H1 (cell line): ENCODE measurements at regions of chr2 and their contacts with region 1.

Region 1: DNA sequence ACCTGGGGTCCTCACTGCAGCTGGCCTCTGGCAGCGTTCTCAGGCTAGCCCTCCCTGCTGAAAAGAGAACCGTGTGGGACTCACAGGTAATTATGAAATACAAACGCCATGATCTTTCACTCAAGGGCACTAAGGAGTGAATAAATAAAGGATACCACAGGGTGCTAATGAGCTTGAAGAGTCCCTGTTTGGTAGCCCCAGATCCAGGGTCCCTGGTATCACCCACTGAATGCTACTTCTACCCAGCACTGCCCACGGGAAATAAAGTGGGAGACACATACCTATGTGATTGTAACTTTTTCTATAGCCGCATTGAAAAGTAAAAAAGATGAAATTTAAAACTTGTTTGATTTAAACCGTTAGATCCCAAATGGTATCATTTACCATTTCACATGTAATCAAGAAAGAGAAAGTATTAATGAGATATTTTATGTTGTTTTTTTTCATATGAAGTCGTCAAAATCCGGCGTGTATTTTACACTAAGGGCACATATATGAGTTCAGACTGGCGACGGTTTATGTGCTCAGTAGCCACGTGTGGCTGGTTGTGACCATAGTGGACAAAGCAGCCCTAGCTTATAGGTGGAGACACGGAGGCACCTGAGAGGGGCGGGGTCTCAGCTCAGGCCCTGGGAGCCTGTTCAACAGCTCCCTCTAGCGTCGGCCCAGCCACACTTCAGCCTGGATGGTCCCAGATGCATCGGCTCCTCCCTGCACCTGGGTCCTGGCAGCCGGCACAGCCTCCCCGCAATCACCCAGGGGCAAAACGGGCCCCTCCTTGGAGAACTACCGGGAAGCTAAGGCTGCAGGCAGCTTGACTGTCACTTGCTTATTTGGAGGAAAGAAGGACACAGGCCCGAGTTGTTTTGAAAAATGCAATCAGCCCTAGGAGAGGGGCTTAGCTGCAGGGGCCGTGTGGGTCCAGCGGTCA is 39.2 kb downstream of the ODC1 start:
- DNase-seq: peak; percentile 84 to 93
- H3K4me3 ChIP-seq: no peak overlapping the region
- H3K27ac ChIP-seq: no peak overlapping the region
- H3K4me1 ChIP-seq: peaks cover 0 to 3% (median 2%) of the 10 kb centered on the region in 4 experiments; a peak in 2 of 7 replicates
- H3K27me3 ChIP-seq: no peaks in the 10 kb centered on the region; a peak in 1 of 7 replicates
- CTCF ChIP-seq: peak; percentile 94 to 99 (median 97)
- EP300 ChIP-seq: no peak
- POLR2A ChIP-seq: no peak
- RAD21 ChIP-seq: peak; percentile 98 to 99

Region 2: DNA sequence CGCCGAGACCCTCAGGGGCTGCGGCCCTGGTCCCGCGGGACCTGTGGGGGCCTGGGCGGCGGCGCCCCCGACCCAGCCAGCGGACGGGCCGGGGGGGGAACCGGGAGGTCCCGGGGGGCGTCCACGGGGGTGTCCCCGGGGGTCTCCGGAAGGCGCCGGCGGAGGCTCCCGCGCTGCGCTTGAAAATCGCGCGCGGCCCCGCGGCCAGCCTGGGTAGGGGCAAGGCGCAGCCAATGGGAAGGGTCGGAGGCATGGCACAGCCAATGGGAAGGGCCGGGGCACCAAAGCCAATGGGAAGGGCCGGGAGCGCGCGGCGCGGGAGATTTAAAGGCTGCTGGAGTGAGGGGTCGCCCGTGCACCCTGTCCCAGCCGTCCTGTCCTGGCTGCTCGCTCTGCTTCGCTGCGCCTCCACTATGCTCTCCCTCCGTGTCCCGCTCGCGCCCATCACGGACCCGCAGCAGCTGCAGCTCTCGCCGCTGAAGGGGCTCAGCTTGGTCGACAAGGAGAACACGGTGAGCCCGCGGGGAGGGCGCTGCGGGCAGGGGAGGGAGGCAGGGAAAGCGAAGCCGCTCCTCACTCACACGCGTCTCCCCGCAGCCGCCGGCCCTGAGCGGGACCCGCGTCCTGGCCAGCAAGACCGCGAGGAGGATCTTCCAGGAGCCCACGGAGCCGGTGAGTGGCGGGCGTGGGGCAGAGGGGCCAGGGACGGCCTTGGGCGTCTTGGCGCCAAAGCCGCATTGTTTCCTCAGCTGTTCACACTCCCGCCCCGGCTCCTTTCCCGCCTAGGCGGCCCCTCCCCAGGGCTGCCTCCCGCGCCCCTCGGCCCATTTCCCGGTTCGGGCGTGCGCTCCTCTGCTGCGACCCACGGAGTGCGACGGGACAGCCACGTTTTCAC is 286.3 kb before region 1 on chr2 and contains the start of gene RRM2:
- CTCF ChIA-PET with region 1: interaction called, 31 read pairs
- POLR2A ChIA-PET with region 1: no interaction called
- DNase-seq: peak; percentile 71 to 96
- H3K4me3 ChIP-seq: peak within 1 kb of the TSS; percentile 85 to 96 (median 88)
- H3K27ac ChIP-seq: peak within 1 kb of the TSS; percentile 85
- H3K4me1 ChIP-seq: peaks cover 1 to 4% (median 4%) of the 10 kb centered on the region in 4 experiments; a peak in 5 of 7 replicates
- H3K27me3 ChIP-seq: no peaks in the 10 kb centered on the region
- CTCF ChIP-seq: no peak
- EP300 ChIP-seq: no peak
- POLR2A ChIP-seq: peak; percentile 97 to 98
- RAD21 ChIP-seq: no peak
- total RNA-seq, gene RRM2: 215 and 228 TPM in 2 replicates

Region 3: DNA sequence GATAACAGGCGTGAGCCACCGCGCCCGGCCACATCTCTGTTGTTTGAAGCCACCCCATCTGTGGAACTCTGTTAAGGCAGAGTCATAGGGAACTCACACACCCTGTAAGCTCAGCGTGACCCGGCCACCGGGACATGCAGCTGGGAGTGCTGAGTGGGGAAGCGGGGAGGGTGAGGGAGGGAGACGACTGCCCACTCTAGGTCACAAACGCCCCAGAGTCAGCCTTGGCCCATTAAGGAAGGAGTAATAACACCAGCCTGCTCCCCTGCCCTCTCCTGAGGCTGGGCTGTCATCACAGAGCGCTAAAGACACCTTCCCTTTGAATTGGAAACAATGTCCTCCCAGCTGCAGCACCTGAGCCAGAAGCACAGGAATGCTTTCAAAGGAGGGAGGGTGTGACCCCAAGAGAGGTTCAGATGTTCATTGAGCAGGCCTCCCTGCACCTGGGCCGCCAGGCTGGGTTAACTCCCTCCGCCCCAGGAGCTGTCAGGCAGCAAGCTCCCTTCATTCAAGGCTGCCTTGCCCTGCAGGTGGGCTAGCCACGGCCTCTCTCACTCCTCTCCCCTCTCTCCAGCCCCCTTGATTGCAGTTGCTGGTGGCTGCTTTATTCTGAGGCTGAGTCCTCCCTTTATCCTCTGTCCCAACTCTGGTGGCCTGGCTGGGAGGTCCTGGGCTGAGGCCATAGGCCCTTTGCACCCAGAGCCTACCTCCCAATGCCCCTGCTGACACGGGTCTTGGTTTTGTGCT is 183.4 kb before region 1 on chr2:
- CTCF ChIA-PET with region 1: interaction called, 16 read pairs
- POLR2A ChIA-PET with region 1: no interaction called
- DNase-seq: no peak
- H3K4me3 ChIP-seq: no peak overlapping the region
- H3K27ac ChIP-seq: no peak overlapping the region
- H3K4me1 ChIP-seq: peaks cover 0 to 3% (median under 1%) of the 10 kb centered on the region in 4 experiments; a peak in 2 of 7 replicates
- H3K27me3 ChIP-seq: no peaks in the 10 kb centered on the region
- CTCF ChIP-seq: no peak
- EP300 ChIP-seq: no peak
- POLR2A ChIP-seq: no peak
- RAD21 ChIP-seq: no peak

Region 4: GRCh38 chr2:10278029-10278762 is 130.7 kb before region 1 on chr2:
- CTCF ChIA-PET with region 1: interaction called, 12 read pairs
- POLR2A ChIA-PET with region 1: no interaction called
- DNase-seq: no peak
- H3K4me3 ChIP-seq: no peak overlapping the region
- H3K27ac ChIP-seq: no peak overlapping the region
- H3K4me1 ChIP-seq: no peaks in the 10 kb centered on the region; a peak in 1 of 7 replicates
- H3K27me3 ChIP-seq: no peaks in the 10 kb centered on the region
- CTCF ChIP-seq: no peak
- EP300 ChIP-seq: no peak
- POLR2A ChIP-seq: no peak
- RAD21 ChIP-seq: no peak

Region 5: GRCh38 chr2:10302479-10303180 is 106.3 kb before region 1 on chr2 and contains the start of gene HPCAL1:
- CTCF ChIA-PET with region 1: interaction called, 32 read pairs
- POLR2A ChIA-PET with region 1: interaction called, 5 read pairs
- DNase-seq: peak; percentile 89 to 95
- H3K4me3 ChIP-seq: peak within 1 kb of the TSS; percentile 42 to 63 (median 49)
- H3K27ac ChIP-seq: no peak within 1 kb of the TSS; the same call in 1 of the 2 replicates
- H3K4me1 ChIP-seq: peaks cover 0 to 14% (median 10%) of the 10 kb centered on the region in 4 experiments; a peak in 6 of 7 replicates
- H3K27me3 ChIP-seq: peaks cover 11 to 41% (median 32%) of the 10 kb centered on the region in 4 experiments
- CTCF ChIP-seq: peak; percentile 45 to 74 (median 55)
- EP300 ChIP-seq: peak in 1 of 2 experiments; percentile 8; a peak in 1 of 3 replicates
- POLR2A ChIP-seq: peak in 1 of 2 experiments; percentile 48; a peak in 1 of 3 replicates
- RAD21 ChIP-seq: peak; percentile 32 to 54
- total RNA-seq, gene HPCAL1: 8.6 and 8.7 TPM in 2 replicates

Region 6: DNA sequence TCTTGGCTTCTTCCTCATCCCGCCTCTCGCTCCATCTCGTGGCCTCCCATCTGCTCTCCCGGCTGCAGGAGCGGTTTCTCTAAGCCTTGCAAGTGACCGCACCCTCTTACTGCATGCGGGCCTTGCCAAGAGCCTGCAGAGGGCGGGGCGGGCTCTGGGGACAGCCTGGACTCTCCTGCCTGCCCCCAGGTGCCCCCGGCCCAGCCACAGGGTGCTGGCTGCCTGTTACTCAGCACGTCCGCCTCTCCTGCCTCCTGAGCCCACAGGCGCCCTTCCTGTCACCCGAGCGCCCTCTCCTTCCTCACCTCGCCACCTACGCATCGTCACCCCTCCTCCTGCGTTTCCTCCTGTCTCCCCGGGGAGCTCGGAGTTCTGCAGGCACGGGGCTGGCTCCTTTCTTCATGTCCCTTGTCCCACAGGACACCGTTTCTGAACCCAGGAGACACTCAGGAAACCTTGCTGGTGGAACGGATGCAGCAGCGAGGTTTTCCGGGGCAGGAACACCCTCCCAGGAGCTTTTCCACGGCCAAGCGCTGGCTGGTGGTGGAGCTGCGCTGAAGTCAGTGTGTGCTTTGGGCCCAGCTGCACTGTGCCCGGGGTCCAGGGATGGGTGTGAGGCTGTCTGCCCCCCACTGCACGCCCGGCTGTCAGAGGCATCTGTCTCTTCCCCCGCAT is 77.8 kb before region 1 on chr2:
- CTCF ChIA-PET with region 1: interaction called, 14 read pairs
- POLR2A ChIA-PET with region 1: interaction called, 5 read pairs
- DNase-seq: no peak
- H3K4me3 ChIP-seq: no peak overlapping the region
- H3K27ac ChIP-seq: no peak overlapping the region; the same call in 1 of the 2 replicates
- H3K4me1 ChIP-seq: peaks cover 3 to 44% (median 19%) of the 10 kb centered on the region in 4 experiments
- H3K27me3 ChIP-seq: 0 out of 7 replicates have a peak, but pooled peaks cover 0 to 1% (median 0%) of the 10 kb centered on the region in 4 experiments
- CTCF ChIP-seq: peak in 1 of 3 experiments; percentile 5; a peak in 1 of 4 replicates
- EP300 ChIP-seq: no peak
- POLR2A ChIP-seq: no peak
- RAD21 ChIP-seq: no peak

Region 7: DNA sequence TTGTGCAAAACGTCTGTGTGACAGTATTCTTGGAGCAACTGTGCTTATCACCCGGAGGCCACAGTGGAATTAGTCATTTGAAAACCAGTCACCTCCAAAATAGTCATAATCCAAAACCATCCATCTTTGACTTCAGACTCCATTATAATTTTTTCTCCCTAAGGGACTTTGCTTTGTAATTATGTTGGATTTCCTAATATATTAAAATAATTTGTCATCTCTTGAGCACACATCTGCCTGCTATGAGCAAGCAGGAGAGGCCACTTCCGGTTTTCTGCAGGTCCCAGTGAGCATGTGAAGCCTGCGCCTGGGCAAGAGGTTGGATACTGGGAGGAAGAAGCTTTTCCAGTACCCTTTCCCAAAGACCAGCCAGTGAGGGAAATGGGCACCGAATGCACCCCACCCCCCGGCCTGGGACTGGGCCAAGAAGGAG is 18.5 kb before region 1 on chr2:
- CTCF ChIA-PET with region 1: interaction called, 48 read pairs
- POLR2A ChIA-PET with region 1: no interaction called
- DNase-seq: no peak
- H3K4me3 ChIP-seq: no peak overlapping the region
- H3K27ac ChIP-seq: no peak overlapping the region
- H3K4me1 ChIP-seq: peaks cover 4 to 10% (median 6%) of the 10 kb centered on the region in 4 experiments; a peak in 5 of 7 replicates
- H3K27me3 ChIP-seq: no peaks in the 10 kb centered on the region
- CTCF ChIP-seq: no peak
- EP300 ChIP-seq: no peak
- POLR2A ChIP-seq: no peak
- RAD21 ChIP-seq: no peak